B cell (primary cell): ENCODE measurements at regions of chr10 and their contacts with region 1.

Region 1: DNA sequence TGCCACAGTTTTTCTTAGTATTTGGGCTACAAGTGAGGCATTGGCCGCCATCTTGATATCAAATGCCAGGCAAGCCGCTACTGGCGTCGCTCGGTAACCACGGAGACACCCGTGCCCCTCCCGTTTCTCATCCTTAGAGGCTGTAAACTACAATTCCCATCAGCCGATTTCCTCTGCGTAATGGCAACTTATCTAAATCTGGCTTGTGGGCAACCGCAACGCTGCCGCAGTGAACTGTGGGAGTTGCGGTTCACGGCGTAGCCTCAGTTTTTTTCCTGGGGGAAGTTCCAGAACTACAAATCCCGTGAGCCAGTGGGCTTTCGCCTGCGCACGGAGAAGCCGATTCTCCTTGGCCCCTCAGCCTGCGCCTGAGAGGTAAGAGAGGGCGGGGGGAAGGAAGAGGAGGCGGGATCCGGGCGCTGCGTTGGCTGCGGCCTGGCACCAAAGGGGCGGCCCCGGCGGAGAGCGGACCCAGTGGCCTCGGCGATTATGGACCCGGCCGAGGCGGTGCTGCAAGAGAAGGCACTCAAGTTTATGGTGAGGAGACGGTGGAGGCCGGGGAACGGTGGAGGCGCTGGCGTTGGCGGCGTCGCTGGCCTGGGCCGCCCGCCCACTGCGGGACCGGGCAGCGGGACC is at the start of gene BTRC:
- DNase-seq: peak; percentile 99
- ATAC-seq: peak; percentile 96
- H3K4me3 ChIP-seq: peak within 1 kb of the TSS; percentile 63 to 87 (median 79)
- H3K4me3 Mint-ChIP-seq: peak within 1 kb of the TSS; percentile 94
- H3K27ac ChIP-seq: peak within 1 kb of the TSS; percentile 42 to 88
- H3K27ac Mint-ChIP-seq: peak within 1 kb of the TSS; percentile 99
- H3K4me1 ChIP-seq: peaks cover 11 to 13% of the 10 kb centered on the region in 2 donors
- H3K4me1 Mint-ChIP-seq: peaks cover 22% of the 10 kb centered on the region
- H3K27me3 ChIP-seq: peaks cover 0 to 15% (median 2%) of the 10 kb centered on the region in 4 experiments
- H3K27me3 Mint-ChIP-seq: peaks cover 20% of the 10 kb centered on the region
- CTCF ChIP-seq: no peak
- total RNA-seq, gene BTRC: 20.1 and 21.9 TPM in 2 replicates

Region 2: DNA sequence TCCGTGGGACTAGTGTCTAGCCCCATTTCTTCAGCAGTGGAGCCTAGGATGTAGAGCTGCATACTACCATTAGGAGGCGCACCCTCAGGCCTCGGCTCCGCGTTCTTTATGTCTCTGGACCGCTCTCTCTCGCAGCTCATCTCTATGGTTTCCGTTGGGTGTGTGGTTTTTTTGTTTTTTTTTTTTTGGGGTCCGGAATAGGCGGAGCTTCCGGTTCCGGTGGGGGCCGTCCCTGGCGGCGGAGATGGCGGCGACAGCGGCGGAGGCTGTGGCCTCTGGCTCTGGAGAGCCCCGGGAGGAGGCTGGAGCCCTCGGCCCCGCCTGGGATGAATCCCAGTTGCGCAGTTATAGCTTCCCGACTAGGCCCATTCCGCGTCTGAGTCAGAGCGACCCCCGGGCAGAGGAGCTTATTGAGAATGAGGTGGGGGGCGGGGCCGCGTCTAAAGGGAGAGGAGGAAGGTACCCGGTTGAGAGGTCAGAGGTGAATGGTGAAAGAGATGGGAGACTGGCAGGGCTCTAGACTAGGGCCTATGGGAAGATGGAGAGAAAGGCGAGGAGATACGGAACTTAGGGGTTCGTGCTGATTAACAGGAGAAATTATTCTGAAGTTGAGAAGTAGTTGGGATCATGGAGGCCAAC is 818.0 kb before region 1 on chr10 and contains the start of gene HIF1AN:
- CTCF ChIA-PET with region 1: no interaction called
- POLR2A ChIA-PET with region 1: no interaction called
- intact Hi-C with region 1: loop called (anchors 5 kb)
- DNase-seq: peak; percentile 96
- ATAC-seq: peak; percentile 99
- H3K4me3 ChIP-seq: peak within 1 kb of the TSS; percentile 74 to 88 (median 75)
- H3K4me3 Mint-ChIP-seq: peak within 1 kb of the TSS; percentile 42
- H3K27ac ChIP-seq: peak within 1 kb of the TSS; percentile 34 to 83
- H3K27ac Mint-ChIP-seq: peak within 1 kb of the TSS; percentile 32
- H3K4me1 ChIP-seq: peaks cover 23 to 24% of the 10 kb centered on the region in 2 donors
- H3K4me1 Mint-ChIP-seq: peaks cover 19% of the 10 kb centered on the region
- H3K27me3 ChIP-seq: no peaks in the 10 kb centered on the region
- H3K27me3 Mint-ChIP-seq: no peaks in the 10 kb centered on the region
- CTCF ChIP-seq: peak; percentile 86
- total RNA-seq, gene HIF1AN: 65.6 and 73.8 TPM in 2 replicates

Region 3: GRCh38 chr10:101042667-101043355 is 311.0 kb before region 1 on chr10:
- CTCF ChIA-PET with region 1: no interaction called
- POLR2A ChIA-PET with region 1: no interaction called
- intact Hi-C with region 1: loop called (anchors 5 kb)
- DNase-seq: peak; percentile 88
- ATAC-seq: peak; percentile 90
- H3K4me3 ChIP-seq: peak overlapping the region; percentile 50 to 76 (median 68)
- H3K4me3 Mint-ChIP-seq: peak overlapping the region; percentile 100
- H3K27ac ChIP-seq: peak overlapping the region in 1 of 2 donors; percentile 76
- H3K27ac Mint-ChIP-seq: peak overlapping the region; percentile 90
- H3K4me1 ChIP-seq: peaks cover 6 to 15% of the 10 kb centered on the region in 2 donors
- H3K4me1 Mint-ChIP-seq: peaks cover 17% of the 10 kb centered on the region
- H3K27me3 ChIP-seq: peaks cover 0 to 22% (median 6%) of the 10 kb centered on the region in 4 experiments
- H3K27me3 Mint-ChIP-seq: peaks cover 19% of the 10 kb centered on the region
- CTCF ChIP-seq: no peak

Region 4: DNA sequence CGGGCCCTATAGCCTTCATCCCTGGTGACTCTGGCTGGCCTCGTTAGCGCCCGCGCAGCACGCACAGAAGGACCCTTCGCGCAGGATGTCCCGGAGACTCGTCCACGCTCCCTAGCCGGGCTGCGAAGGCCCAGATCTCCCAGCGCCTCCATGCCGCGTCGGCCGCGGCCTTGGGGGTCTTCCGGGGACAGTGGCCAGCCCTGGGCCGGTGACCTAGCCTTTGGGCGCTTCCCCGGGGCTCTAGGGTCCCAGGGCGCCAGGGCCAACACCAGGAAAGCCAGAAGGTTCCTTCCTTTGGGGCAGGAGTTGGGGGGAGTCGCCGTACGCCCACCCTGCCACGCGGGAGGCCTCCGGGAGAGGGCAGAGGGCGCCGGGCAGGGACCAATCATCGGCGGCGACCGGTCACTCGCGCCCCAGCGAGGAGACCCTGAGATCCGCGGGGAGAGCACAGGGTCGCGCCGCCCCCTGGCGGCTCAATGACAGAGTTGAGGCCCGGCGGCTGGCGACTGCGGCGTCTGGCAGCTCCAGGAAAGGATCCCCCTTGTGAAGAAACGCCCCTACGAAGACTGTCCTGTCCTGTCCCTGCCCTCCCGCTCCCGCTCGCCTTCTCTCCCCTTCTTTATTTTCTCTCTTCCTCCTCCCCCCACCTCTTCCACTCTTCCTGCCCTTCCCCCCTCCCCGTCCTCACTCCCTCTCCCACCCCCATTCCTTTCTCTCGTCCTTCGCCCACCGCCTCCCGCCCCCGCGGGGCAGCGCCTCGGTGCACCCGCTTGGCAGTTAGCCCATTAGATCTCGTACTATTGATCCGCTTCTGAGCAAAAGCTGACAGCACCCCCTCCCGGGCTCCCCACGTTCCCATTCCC is 62.2 kb before region 1 on chr10:
- CTCF ChIA-PET with region 1: interaction called, 3 read pairs
- POLR2A ChIA-PET with region 1: no interaction called
- intact Hi-C with region 1: loop called (anchors 2 kb)
- DNase-seq: peak; percentile 68
- ATAC-seq: peak; percentile 69
- H3K4me3 ChIP-seq: peak overlapping the region in 4 of 5 experiments; percentile 24 to 63 (median 44)
- H3K4me3 Mint-ChIP-seq: peak overlapping the region; percentile 83
- H3K27ac ChIP-seq: no peak overlapping the region
- H3K27ac Mint-ChIP-seq: no peak overlapping the region
- H3K4me1 ChIP-seq: peaks cover 21 to 35% of the 10 kb centered on the region in 2 donors
- H3K4me1 Mint-ChIP-seq: peaks cover 18% of the 10 kb centered on the region
- H3K27me3 ChIP-seq: peaks cover 2 to 80% (median 49%) of the 10 kb centered on the region in 4 experiments
- H3K27me3 Mint-ChIP-seq: peaks cover 64% of the 10 kb centered on the region
- CTCF ChIP-seq: peak; percentile 73

Region 5: DNA sequence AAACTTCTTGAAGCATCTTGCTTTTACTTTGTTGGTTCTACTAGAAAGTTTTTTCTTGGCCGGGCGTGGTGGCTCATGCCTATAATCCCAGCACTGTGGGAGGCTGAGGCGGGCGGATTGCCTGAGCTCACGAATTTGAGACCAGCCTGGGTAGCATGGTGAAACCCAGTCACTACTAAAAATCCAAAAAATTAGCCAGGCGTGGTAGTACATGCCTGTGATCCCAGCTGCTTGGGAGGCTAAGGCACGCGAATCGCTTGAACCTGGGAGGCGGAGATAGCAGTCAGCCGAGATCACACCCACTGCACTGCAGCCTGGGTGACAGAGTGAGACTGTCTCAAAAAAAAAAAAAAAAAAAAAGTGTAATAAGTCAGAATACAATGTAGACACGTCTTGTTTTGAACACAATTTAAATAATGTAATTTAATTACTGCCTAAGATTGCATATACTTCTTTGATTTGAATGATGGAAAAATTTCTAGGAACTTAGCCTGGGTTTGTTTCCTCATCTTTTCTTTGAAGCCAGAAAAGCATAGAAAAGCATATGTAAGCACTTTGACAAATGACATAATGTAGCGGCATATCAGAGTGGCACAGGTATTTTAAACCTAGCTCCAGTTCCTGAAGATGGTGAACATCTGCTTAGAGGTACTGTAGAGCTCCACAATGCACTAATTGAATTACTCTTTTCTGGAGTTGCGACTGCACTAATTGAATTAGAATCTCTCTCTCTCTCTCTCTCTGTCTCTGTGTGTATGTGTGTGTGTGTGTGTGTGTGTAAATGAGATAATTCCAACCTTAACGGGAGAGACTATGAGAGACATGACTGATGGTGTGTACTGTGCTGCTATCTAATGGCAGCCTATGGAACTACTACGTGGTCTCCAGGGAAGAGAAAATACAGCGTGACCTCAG is 88.0 kb after region 1 on chr10:
- CTCF ChIA-PET with region 1: no interaction called
- POLR2A ChIA-PET with region 1: no interaction called
- intact Hi-C with region 1: no loop called
- DNase-seq: peak; percentile 50
- ATAC-seq: peak; percentile 71
- H3K4me3 ChIP-seq: no peak overlapping the region
- H3K4me3 Mint-ChIP-seq: no peak overlapping the region
- H3K27ac ChIP-seq: no peak overlapping the region
- H3K27ac Mint-ChIP-seq: no peak overlapping the region
- H3K4me1 ChIP-seq: no peaks in the 10 kb centered on the region
- H3K4me1 Mint-ChIP-seq: peaks cover 1% of the 10 kb centered on the region
- H3K27me3 ChIP-seq: no peaks in the 10 kb centered on the region
- H3K27me3 Mint-ChIP-seq: no peaks in the 10 kb centered on the region
- CTCF ChIP-seq: peak; percentile 50

Region 6: DNA sequence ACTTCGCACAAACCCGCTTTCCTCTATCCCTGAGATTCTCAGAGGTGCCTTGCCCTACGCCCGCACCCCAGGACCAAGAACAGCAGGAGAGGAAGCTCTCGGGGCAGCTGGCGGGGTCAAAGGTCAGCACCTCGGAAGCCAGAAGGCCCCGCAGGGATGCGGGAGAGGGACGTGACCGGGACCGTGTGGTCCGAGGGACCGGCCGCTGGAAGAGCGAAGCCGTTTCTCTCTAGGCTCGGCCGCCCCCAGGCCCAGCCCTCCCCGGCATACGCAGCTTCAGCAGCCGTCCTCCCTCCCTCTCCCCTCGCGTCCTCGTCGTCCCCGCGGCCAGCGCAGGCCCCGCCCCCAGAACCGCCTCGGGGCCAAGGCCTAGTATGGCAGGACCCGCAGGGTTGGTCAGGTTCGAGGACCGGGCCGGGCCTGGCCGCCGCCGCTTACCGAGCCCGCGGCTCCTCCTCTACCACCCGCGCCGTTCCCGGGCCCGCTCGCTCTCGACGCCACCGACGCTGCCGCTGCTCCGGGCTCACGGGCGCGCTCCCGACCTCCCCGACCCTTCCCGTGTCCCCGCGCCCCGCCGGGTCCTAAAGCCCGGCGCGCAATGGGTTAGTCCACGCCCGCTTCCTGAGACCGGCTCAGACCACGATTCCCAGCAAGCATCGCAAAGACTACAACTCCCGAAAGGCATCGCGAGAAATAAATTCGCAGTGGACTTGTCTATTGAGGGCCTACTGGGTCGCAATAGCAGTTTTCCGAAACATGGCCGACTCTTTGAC is 702.0 kb after region 1 on chr10 and contains the start of gene ARMH3:
- CTCF ChIA-PET with region 1: no interaction called
- POLR2A ChIA-PET with region 1: no interaction called
- intact Hi-C with region 1: loop called (anchors 5 kb)
- DNase-seq: peak; percentile 94
- ATAC-seq: peak; percentile 91
- H3K4me3 ChIP-seq: peak within 1 kb of the TSS; percentile 76 to 99 (median 93)
- H3K4me3 Mint-ChIP-seq: peak within 1 kb of the TSS; percentile 99
- H3K27ac ChIP-seq: peak within 1 kb of the TSS; percentile 75 to 80
- H3K27ac Mint-ChIP-seq: peak within 1 kb of the TSS; percentile 98
- H3K4me1 ChIP-seq: peaks cover 15 to 26% of the 10 kb centered on the region in 2 donors
- H3K4me1 Mint-ChIP-seq: peaks cover 36% of the 10 kb centered on the region
- H3K27me3 ChIP-seq: no peaks in the 10 kb centered on the region
- H3K27me3 Mint-ChIP-seq: no peaks in the 10 kb centered on the region
- CTCF ChIP-seq: no peak
- total RNA-seq, gene ARMH3: 36.2 and 40.7 TPM in 2 replicates

Region 7: DNA sequence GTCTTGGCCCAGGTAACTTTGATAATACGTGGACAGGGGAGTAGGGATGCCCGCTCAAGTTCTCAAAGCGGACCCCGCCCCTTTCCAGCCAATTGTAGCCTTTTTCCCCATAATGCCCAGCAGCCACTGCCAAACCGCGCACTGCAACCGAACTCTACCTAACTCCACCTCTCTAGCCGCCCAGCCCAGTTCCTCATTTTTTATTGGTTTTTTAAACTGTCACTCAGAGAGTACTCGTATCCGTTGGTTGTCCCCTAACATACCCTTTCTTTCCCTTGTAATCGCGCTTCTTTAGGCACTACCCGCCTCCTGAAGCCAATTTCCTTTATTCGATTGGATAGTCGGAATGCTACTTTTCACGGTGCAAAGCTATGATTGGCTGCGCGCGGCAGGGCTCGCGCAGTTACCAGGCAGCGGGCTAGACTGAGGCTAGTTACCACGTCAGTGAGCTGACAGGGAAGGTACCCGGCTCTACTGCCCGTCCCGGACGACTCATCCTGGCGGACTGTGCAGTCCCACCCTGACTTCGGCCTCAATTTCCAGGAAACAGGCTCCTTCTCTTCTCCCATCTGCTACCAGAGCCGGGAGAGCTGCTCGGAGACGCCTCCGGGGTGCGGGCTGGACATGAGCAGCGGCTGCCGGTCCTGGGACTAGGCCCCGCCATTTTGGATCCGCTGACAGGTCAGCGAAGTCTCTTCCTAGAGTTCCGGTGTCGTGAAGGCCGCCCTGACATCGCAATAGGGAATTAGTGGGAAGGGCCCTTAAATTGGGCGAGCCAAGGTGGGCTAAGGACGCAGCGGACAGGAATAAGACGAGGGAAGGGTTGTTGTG is 891.5 kb after region 1 on chr10 and contains the start of gene GBF1:
- CTCF ChIA-PET with region 1: no interaction called
- POLR2A ChIA-PET with region 1: no interaction called
- intact Hi-C with region 1: loop called (anchors 10 kb)
- DNase-seq: peak; percentile 98
- ATAC-seq: peak; percentile 86
- H3K4me3 ChIP-seq: peak within 1 kb of the TSS; percentile 80 to 99 (median 98)
- H3K4me3 Mint-ChIP-seq: peak within 1 kb of the TSS; percentile 94
- H3K27ac ChIP-seq: peak within 1 kb of the TSS; percentile 86 to 90
- H3K27ac Mint-ChIP-seq: peak within 1 kb of the TSS; percentile 38
- H3K4me1 ChIP-seq: peaks cover 50 to 51% of the 10 kb centered on the region in 2 donors
- H3K4me1 Mint-ChIP-seq: peaks cover 56% of the 10 kb centered on the region
- H3K27me3 ChIP-seq: peaks cover 0 to 31% (median 27%) of the 10 kb centered on the region in 4 experiments
- H3K27me3 Mint-ChIP-seq: peaks cover 23% of the 10 kb centered on the region
- CTCF ChIP-seq: no peak
- total RNA-seq, gene GBF1: 39.3 and 41.2 TPM in 2 replicates

Region 8: DNA sequence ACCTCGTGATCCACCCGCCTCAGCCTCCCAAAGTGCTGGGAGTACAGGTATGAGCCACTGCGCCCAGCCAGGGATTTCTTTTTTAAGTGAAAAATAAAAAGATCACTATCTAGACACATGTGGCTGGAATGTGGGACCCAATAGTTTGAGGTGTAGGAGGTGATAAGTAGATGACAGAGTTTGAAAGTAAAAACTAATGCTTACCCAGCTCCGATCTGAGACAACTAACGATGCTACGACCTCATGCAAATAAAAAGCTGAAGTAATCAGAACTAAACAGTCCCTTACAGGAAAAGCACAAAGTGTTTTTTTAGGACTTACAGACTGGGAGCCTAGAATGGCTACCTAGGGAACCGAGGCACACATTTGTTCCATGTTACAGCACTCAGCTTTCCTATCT is 1974.1 kb after region 1 on chr10:
- CTCF ChIA-PET with region 1: no interaction called
- POLR2A ChIA-PET with region 1: no interaction called
- intact Hi-C with region 1: no loop called
- DNase-seq: no peak
- ATAC-seq: no peak
- H3K4me3 ChIP-seq: no peak overlapping the region
- H3K4me3 Mint-ChIP-seq: no peak overlapping the region
- H3K27ac ChIP-seq: no peak overlapping the region
- H3K27ac Mint-ChIP-seq: no peak overlapping the region
- H3K4me1 ChIP-seq: no peaks in the 10 kb centered on the region
- H3K4me1 Mint-ChIP-seq: no peaks in the 10 kb centered on the region
- H3K27me3 ChIP-seq: no peaks in the 10 kb centered on the region
- H3K27me3 Mint-ChIP-seq: no peaks in the 10 kb centered on the region
- CTCF ChIP-seq: no peak